ENCODE measurements at regions of chr10 and their contacts with region 1.

Region 1: GRCh38 chr10:30662814-30663213 is 33.3 kb upstream of the LYZL2 start:
- DNase-seq: no peak
- H3K4me3 ChIP-seq: no peak overlapping the region
- H3K27ac ChIP-seq: no peak overlapping the region
- H3K4me1 ChIP-seq: no peaks in the 10 kb centered on the region
- H3K27me3 ChIP-seq: no peaks in the 10 kb centered on the region
- CTCF ChIP-seq: no peak

Region 2: DNA sequence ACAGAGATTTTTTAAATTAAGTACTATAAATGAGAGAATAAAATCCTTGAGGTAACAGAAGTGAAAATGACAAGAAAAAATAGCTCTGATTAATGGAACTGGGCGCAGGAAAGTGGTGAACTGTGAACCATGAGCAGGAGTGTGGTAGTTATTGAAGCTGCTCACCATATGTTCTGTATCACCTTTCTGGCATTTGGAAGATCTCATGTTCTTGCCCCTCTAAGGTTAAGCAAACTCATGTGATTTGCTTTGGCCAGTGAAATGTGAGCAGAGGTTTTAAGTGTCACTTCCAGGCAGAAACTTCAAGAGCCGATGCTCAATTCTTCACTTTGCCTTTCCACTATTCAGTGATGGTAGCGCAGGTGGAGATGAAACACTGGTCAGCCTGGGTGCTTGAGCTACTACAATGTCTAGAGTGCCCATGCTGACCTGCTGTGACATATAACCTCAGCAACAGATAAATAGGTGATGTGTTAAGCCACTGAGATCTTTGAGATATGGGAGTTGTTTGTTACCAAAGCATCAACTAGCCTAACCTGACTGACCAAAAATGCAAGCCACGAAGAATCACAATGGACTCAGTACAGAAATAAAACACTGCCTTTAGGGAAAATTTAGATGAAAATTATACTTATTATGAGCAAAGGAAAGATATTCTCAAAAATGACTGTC is 332.2 kb before region 1 on chr10:
- CTCF ChIA-PET with region 1: no interaction called
- POLR2A ChIA-PET with region 1: no interaction called
- intact Hi-C with region 1: no loop called
- DNase-seq: no peak
- H3K4me3 ChIP-seq: no peak overlapping the region
- H3K27ac ChIP-seq: no peak overlapping the region
- H3K4me1 ChIP-seq: no peaks in the 10 kb centered on the region
- H3K27me3 ChIP-seq: no peaks in the 10 kb centered on the region
- CTCF ChIP-seq: no peak

Region 3: DNA sequence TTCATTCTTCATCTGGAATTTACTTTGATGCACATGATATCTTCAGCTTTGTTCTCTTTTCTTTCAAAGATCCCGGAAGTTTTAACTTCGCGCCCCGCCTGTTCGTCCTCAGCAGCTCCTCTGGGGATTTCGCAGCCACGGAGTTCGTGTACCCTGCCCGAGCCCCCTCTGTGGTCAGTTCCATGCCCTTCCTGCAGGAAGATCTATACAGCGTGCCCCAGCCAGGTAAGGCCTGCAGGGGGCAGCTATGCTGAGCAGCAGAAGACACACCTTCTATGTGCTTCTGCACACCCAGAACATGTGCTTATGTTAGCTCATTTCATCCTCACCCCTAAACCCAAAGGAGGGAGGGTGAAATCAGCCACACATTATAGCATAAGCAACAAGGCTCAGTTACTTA is 46.4 kb after region 1 on chr10:
- CTCF ChIA-PET with region 1: no interaction called
- POLR2A ChIA-PET with region 1: interaction called, 11 read pairs
- intact Hi-C with region 1: no loop called
- DNase-seq: no peak
- H3K4me3 ChIP-seq: no peak overlapping the region
- H3K27ac ChIP-seq: no peak overlapping the region
- H3K4me1 ChIP-seq: no peaks in the 10 kb centered on the region
- H3K27me3 ChIP-seq: no peaks in the 10 kb centered on the region
- CTCF ChIP-seq: no peak

Region 4: DNA sequence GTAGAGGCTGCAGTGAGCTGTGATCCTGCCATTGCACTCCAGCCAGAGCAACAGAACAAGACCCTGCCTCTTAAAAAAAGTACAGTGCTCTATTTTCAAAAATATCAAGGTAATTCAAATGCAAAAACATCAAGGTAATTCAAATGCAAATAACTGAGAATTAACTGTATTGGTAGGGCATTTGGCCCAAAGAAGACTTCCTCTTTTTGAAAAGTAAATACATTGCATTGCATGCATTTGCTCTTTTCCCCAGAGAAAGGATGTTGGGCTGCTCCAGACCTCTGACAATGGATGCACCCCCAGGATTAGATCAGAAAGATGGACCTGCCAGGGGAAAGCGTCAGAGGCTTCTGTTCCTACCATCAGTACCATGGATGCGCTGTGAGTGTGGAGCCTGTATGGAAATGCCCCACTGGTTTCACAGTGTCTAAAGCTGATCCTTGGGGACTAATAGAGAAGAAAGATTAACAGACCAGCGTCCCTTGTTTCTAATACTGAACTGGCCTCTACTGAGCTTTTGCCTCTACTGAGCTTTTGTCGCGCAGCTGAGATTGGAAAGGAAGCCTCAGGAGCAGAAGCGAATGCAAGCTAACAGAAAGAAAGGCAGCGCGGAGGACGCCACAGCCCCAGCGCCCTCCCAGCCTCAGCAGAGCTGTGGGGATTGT is 60.3 kb after region 1 on chr10:
- CTCF ChIA-PET with region 1: no interaction called
- POLR2A ChIA-PET with region 1: no interaction called
- intact Hi-C with region 1: no loop called
- DNase-seq: no peak
- H3K4me3 ChIP-seq: no peak overlapping the region
- H3K27ac ChIP-seq: no peak overlapping the region
- H3K4me1 ChIP-seq: 0 out of 2 replicates have a peak, but pooled peaks cover 4% of the 10 kb centered on the region
- H3K27me3 ChIP-seq: no peaks in the 10 kb centered on the region
- CTCF ChIP-seq: no peak

Region 5: GRCh38 chr10:31490858-31491504 is 828.2 kb after region 1 on chr10:
- CTCF ChIA-PET with region 1: no interaction called
- POLR2A ChIA-PET with region 1: no interaction called
- intact Hi-C with region 1: no loop called
- DNase-seq: peak in 1 of 2 experiments; percentile 19
- H3K4me3 ChIP-seq: no peak overlapping the region
- H3K27ac ChIP-seq: no peak overlapping the region
- H3K4me1 ChIP-seq: no peaks in the 10 kb centered on the region
- H3K27me3 ChIP-seq: no peaks in the 10 kb centered on the region
- CTCF ChIP-seq: peak; percentile 68

Measured in PC-9 (cell line).